ENCODE measurements at regions of chr1 and their contacts with region 1.

Region 1: DNA sequence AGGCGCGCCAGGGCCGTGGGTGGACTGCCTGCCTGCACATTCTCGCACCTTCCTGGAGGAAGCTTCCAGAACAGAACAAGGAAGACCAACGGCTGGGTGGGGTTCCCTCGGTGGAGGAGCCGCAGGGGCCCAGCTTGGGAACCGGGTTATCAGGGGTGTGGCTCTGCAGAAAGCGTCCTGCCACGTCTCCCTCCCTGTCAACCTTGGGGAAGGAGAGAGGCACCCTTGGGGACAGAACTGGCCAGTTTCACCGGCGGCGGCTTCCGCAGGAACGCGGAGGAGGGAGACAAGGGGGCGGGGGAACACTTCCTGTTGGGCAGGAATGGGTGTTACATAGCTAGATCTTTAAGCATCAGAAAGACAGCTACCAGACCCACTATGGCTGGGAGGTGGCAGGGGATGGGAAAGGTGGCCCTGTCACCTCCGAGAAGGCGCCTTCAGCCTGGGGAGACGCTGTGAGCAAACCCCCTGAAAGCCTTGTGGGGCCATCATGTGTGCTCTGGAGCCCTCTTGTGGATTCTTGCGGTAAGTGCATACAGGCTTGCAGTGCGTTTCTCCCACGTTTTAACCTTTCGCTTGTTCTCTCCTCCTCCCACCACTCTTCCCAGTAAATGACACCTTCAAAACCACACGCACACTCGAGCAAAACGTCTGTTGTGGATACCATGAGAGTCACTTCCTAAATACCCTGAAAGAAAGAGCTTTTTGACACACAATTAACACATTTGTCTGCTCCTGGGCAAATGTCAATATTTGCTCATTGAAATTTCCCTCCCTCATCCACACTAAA is 3.8 kb upstream of the PLEKHA6 start:
- DNase-seq: peak; percentile 92
- H3K4me3 Mint-ChIP-seq: peak overlapping the region; percentile 66
- H3K27ac Mint-ChIP-seq: peak overlapping the region; percentile 58
- H3K4me1 Mint-ChIP-seq: peaks cover 12% of the 10 kb centered on the region
- H3K27me3 Mint-ChIP-seq: no peaks in the 10 kb centered on the region
- CTCF ChIP-seq: peak; percentile 100

Region 2: GRCh38 chr1:204128964-204129896 is 234.3 kb before region 1 on chr1:
- CTCF ChIA-PET with region 1: interaction called, 14 read pairs
- POLR2A ChIA-PET with region 1: no interaction called
- intact Hi-C with region 1: no loop called
- DNase-seq: peak; percentile 86
- H3K4me3 Mint-ChIP-seq: peak overlapping the region; percentile 68
- H3K27ac Mint-ChIP-seq: peak overlapping the region; percentile 63
- H3K4me1 Mint-ChIP-seq: peaks cover 58% of the 10 kb centered on the region
- H3K27me3 Mint-ChIP-seq: no peaks in the 10 kb centered on the region
- CTCF ChIP-seq: peak; percentile 100

Region 3: DNA sequence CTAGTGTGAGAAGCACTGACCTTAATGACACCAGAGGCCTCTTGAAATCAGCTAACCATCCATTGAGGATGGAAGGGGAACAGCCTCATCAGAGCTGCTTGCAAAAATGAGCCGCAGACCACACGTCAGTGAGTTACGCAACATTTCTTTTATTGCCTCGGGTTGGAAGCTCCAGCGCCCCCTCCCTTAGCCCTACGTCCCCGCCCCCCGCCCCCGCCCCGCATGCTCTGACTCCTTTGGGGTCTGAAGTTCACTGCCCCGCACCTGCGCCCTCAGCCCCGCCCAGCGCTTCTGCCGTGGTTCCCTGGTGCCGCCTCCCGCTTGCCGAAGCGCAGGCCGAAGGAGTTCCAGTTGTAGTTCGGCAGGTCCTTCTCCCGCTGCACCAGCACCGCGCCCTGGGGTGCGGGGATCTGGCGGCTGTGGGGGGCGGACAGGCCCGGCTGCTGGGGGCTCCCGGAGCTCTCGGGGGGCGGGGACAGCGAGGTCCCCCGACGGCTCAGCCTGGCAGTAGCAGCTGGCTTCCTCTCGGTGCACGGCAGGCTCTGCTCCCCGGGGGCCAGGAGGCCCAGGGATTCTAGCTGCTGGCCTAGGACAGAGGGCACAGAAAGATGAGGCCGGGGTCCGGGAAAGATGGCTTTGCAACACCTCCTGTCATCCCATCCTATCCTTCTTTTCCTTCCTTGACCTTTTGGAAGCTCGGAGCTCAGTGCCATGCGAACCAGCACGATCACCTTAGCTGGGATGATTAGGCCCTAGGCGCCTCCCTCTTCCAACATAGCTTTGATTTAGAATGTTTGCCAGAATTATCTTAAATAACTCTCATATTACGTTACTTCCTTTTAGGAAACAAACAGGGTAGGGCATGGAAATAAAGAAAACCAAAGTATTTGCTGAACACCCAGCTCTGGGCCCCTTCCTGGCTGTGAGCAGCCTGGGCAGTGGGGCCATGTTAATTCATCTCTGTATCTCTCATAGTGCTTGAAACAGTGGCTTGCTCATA is 173.0 kb before region 1 on chr1:
- CTCF ChIA-PET with region 1: interaction called, 11 read pairs
- POLR2A ChIA-PET with region 1: no interaction called
- intact Hi-C with region 1: no loop called
- DNase-seq: no peak
- H3K4me3 Mint-ChIP-seq: no peak overlapping the region
- H3K27ac Mint-ChIP-seq: no peak overlapping the region
- H3K4me1 Mint-ChIP-seq: no peaks in the 10 kb centered on the region
- H3K27me3 Mint-ChIP-seq: peaks cover 66% of the 10 kb centered on the region
- CTCF ChIP-seq: no peak

Region 4: DNA sequence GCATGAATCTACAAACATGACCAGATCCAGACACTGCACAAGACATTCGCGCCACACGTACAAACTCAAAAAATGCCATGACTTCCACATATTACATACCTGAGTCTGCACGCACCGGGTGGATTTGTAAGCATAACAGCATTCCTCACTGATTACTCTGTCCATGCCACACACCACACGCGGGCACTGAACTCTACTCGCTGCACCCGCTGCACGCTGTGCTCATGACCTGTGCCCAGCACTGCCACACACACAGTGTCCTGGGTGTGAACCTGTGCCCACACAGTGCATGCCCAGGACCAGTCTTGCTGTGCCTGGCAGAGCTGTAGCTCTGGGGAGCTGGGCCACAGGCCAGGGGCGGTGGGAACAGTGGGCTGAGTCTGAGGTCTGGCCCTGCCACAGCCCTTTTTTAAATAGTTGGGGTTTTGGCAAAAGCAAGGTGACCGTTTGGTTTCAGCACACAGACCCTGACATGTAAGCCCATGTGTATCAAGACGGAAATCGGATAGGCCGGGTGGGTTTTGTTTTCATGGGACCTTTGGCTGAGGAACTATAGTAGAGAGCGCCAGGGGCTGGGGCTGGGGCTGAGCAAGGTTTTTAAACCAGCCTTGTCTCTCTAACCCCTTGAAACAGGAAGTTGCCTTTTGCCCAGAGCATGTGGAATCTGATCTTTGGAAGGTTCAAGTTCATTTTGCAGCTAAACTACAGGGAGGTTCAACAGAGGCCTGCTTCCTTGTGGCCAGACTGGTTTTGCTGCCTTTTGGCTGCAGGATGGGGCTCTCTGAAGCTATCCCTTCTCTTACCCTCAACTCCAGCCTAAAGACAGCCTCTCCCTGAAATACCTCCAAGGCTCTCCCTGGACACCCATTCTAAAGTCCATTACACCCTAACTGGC is 137.4 kb before region 1 on chr1:
- CTCF ChIA-PET with region 1: interaction called, 16 read pairs
- POLR2A ChIA-PET with region 1: no interaction called
- intact Hi-C with region 1: no loop called
- DNase-seq: peak; percentile 34
- H3K4me3 Mint-ChIP-seq: no peak overlapping the region
- H3K27ac Mint-ChIP-seq: peak overlapping the region; percentile 1
- H3K4me1 Mint-ChIP-seq: peaks cover 18% of the 10 kb centered on the region
- H3K27me3 Mint-ChIP-seq: no peaks in the 10 kb centered on the region
- CTCF ChIP-seq: no peak

Region 5: GRCh38 chr1:204278254-204278653 is 85.3 kb before region 1 on chr1:
- CTCF ChIA-PET with region 1: interaction called, 87 read pairs
- POLR2A ChIA-PET with region 1: interaction called, 9 read pairs
- intact Hi-C with region 1: no loop called
- DNase-seq: no peak
- H3K4me3 Mint-ChIP-seq: no peak overlapping the region
- H3K27ac Mint-ChIP-seq: peak overlapping the region; percentile 59
- H3K4me1 Mint-ChIP-seq: peaks cover 39% of the 10 kb centered on the region
- H3K27me3 Mint-ChIP-seq: no peaks in the 10 kb centered on the region
- CTCF ChIP-seq: no peak

Region 6: DNA sequence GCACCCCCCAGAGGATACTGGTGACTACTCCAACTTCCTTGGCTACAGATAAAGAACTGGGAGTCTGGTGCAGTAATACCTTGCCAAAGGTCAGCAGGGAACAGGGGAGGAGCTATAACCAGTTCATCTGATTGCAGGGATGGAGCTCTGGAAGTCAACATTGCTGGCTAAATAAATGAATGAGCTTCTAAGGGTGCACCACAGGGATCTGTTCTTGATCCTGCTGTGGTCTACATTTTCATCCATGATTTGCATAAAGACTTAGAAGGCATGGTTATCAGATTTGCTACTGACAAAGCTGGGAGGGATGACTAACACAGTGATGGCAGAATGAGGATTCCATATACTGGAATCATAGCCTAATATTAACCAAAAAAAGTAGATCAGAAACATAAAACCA is 22.1 kb before region 1 on chr1:
- CTCF ChIA-PET with region 1: interaction called, 76 read pairs
- POLR2A ChIA-PET with region 1: interaction called, 5 read pairs
- intact Hi-C with region 1: no loop called
- DNase-seq: no peak
- H3K4me3 Mint-ChIP-seq: no peak overlapping the region
- H3K27ac Mint-ChIP-seq: no peak overlapping the region
- H3K4me1 Mint-ChIP-seq: peaks cover 12% of the 10 kb centered on the region
- H3K27me3 Mint-ChIP-seq: no peaks in the 10 kb centered on the region
- CTCF ChIP-seq: no peak

Region 7: DNA sequence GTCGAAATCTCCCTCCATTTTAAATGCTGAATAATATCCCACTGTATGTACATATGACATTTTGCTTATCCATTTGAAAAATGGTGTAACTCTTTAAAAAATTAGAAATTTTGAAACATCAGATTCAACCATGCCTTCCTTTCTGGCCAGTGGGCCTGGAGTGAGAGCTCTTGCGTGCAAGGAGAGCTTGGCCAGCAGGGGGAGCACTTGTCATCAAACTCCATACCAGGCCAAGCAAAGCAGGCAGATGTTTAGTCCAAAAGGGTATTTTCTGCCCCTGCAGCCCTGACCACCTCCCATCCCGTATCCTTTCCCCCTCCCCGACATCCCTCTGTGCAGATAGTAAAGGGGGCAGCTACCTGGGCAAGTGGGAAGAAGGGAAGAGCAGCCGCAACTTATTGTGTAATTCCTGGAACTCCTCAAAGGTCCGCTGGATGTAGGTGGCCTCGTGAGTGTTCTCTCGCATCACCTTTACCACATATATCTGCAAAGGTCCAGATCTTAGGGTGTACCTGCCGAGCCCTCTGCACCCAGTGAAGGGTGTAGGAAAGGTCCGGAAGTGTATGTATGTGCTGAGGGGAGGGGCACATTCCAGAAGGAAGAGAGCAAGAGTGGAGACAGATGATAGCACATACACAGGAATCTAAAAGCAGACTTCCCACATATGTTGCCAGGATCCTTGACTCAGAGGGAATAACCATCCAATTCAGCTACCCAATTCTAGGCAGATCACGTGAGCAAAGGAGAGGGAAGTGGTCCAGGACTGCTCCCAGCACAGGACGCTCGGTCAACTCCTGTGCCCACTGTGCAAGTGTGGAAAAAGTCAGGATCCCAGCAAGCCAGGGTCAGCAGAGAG is 68.0 kb after region 1 on chr1:
- CTCF ChIA-PET with region 1: interaction called, 10 read pairs
- POLR2A ChIA-PET with region 1: no interaction called
- intact Hi-C with region 1: no loop called
- DNase-seq: peak; percentile 88
- H3K4me3 Mint-ChIP-seq: no peak overlapping the region
- H3K27ac Mint-ChIP-seq: no peak overlapping the region
- H3K4me1 Mint-ChIP-seq: peaks cover 39% of the 10 kb centered on the region
- H3K27me3 Mint-ChIP-seq: no peaks in the 10 kb centered on the region
- CTCF ChIP-seq: peak; percentile 99

Region 8: GRCh38 chr1:204556458-204557052 is 193.0 kb after region 1 on chr1:
- CTCF ChIA-PET with region 1: no interaction called
- POLR2A ChIA-PET with region 1: no interaction called
- intact Hi-C with region 1: no loop called
- DNase-seq: no peak
- H3K4me3 Mint-ChIP-seq: no peak overlapping the region
- H3K27ac Mint-ChIP-seq: no peak overlapping the region
- H3K4me1 Mint-ChIP-seq: no peaks in the 10 kb centered on the region
- H3K27me3 Mint-ChIP-seq: no peaks in the 10 kb centered on the region
- CTCF ChIP-seq: no peak

Region 9: DNA sequence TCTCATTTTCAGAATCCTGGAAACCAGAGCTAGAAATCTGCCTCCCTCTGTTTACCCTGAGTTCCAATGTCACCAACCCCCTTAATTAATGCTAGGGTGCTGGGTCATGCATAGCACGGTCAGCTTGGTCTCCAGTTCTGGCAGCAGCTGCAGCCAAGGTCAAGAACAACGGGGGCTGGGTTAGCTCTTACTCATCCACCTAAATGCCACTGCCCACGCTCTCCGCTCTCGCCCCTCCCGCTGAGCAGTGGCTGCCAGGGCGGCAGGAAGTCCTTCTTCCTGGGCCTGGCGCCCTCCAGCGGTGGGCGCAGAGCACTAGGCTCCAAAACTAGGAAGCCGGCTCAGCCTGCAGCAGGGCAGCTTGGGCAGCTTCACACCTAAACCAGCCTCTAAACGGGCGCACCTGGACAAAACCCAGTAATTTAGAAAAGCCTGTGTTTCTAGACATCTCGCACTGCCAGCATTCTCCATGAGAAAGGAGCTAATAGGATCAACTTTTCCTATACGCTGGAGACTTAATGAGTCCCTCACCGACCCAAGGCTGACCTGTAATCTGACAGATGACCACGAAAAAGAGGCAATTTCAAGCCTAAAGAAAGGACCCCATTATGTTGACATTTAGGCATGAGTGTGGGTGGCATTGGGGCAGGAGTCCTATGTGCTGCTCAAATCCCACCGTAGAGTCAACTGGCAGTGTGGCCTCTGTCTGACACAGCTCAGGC is 400.3 kb after region 1 on chr1:
- CTCF ChIA-PET with region 1: no interaction called
- POLR2A ChIA-PET with region 1: no interaction called
- intact Hi-C with region 1: no loop called
- DNase-seq: peak; percentile 94
- H3K4me3 Mint-ChIP-seq: no peak overlapping the region
- H3K27ac Mint-ChIP-seq: no peak overlapping the region
- H3K4me1 Mint-ChIP-seq: peaks cover 11% of the 10 kb centered on the region
- H3K27me3 Mint-ChIP-seq: peaks cover 57% of the 10 kb centered on the region
- CTCF ChIP-seq: peak; percentile 98

Measured in MCF 10A (cell line).